Activated naive CD4-positive, alpha-beta T cell treated with anti-CD3 and anti-CD28 coated beads, Interleukin-2, amount 10 ng/mL, durations not matched to agents 7 days and 5 days (primary cell): ENCODE measurements at regions of chr21 and their contacts with region 1.

Region 1: GRCh38 chr21:29347274-29347681 is 48.6 kb downstream of the BACH1 start:
- DNase-seq: no peak
- H3K4me3 Mint-ChIP-seq: no peak overlapping the region
- H3K27ac Mint-ChIP-seq: no peak overlapping the region
- H3K4me1 Mint-ChIP-seq: peaks cover 13% of the 10 kb centered on the region
- H3K27me3 Mint-ChIP-seq: no peaks in the 10 kb centered on the region

Region 2: DNA sequence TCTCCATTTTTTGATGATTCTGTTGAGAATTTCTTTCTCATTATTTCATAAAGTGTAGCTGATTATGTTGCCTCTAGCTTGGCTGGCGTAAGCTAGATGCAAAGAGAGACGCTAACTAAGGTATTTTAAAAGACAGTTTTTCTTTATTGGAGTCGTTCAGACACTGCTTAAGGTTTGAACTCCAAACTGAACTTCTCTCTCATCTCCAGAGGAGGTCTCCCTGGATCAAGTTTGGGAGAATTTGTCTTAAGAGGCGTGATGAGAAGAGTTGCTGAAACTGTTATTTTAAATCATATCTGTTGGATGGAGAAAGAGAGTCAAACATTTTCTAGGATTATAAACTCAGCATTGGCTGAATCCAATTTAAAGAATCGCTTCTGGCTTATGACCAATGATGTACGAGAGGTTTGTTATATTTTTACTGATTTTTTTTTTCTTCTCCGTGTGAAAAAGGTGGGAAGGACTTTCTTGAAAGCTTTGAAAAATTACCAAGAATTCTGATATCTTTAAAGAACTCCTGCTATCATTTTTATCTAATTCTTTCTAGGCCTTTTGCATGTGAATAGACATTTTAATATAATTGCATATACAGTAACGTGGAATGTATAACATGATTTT is 182.8 kb before region 1 on chr21:
- CTCF ChIA-PET with region 1: interaction called, 10 read pairs
- DNase-seq: no peak
- H3K4me3 Mint-ChIP-seq: no peak overlapping the region
- H3K27ac Mint-ChIP-seq: no peak overlapping the region
- H3K4me1 Mint-ChIP-seq: peaks cover 5% of the 10 kb centered on the region
- H3K27me3 Mint-ChIP-seq: no peaks in the 10 kb centered on the region

Region 3: GRCh38 chr21:29360799-29361765 is 13.8 kb after region 1 on chr21:
- CTCF ChIA-PET with region 1: interaction called, 12 read pairs
- DNase-seq: no peak
- H3K4me3 Mint-ChIP-seq: no peak overlapping the region
- H3K27ac Mint-ChIP-seq: no peak overlapping the region
- H3K4me1 Mint-ChIP-seq: peaks cover 8% of the 10 kb centered on the region
- H3K27me3 Mint-ChIP-seq: no peaks in the 10 kb centered on the region